Left cardiac atrium (tissue), 4 donors: ENCODE measurements at regions of chr6 and their contacts with region 1.

Region 1: GRCh38 chr6:161476711-161477110 is 202.8 kb upstream of the AGPAT4 start:
- DNase-seq: peak; percentile 29
- ATAC-seq: peak in 1 of 2 donors; percentile 79

Region 2: GRCh38 chr6:161444464-161444863 is 32.2 kb before region 1 on chr6:
- intact Hi-C with region 1: loop called in 1 of 2 experiments (anchors 5 kb)
- DNase-seq: no peak
- ATAC-seq: peak in 1 of 2 donors; percentile 15

Region 3: DNA sequence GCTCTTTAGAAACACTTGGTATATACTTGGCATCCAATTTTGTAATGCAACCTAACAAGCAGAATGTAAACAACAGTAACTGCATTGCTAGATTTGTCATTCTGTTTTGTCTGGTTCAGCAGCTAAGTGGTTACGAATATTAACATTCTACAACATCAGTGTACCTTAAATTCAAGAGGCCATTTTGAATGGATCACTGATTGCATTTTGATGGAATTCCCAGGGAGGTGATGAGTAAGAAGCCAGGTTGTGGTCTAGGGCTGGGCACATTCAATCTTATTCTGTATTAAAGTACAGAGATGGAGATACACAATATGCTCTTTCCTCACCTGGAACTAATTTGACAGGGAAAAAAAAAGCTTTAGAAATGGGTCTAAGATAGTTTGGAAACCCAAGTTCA is 767.3 kb after region 1 on chr6:
- intact Hi-C with region 1: no loop called
- DNase-seq: no peak
- ATAC-seq: no peak